ENCODE measurements at regions of chr3 and their contacts with region 1.

Region 1: GRCh38 chr3:15205934-15206661 is at the start of gene CAPN7:
- DNase-seq: peak; percentile 67
- ATAC-seq: peak; percentile 94
- H3K4me3 ChIP-seq: peak within 1 kb of the TSS; percentile 94
- H3K27ac ChIP-seq: peak within 1 kb of the TSS; percentile 61
- H3K4me1 ChIP-seq: no peaks in the 10 kb centered on the region
- H3K27me3 ChIP-seq: no peaks in the 10 kb centered on the region
- CTCF ChIP-seq: peak; percentile 39 to 40 (median 39); a peak in 4 of 6 replicates
- EP300 ChIP-seq: no peak
- POLR2A ChIP-seq: peak; percentile 95
- RAD21 ChIP-seq: no peak
- polyA plus RNA-seq, gene CAPN7: 5.3 to 6.7 TPM

Region 2: GRCh38 chr3:14482271-14482721 is 723.8 kb before region 1 on chr3:
- CTCF ChIA-PET with region 1: no interaction called
- POLR2A ChIA-PET with region 1: no interaction called
- RAD21 ChIA-PET with region 1: no interaction called
- SMC1A ChIA-PET with region 1: no interaction called
- in situ Hi-C with region 1: no loop called
- intact Hi-C with region 1: no loop called
- DNase-seq: no peak
- ATAC-seq: no peak
- H3K4me3 ChIP-seq: no peak overlapping the region
- H3K27ac ChIP-seq: no peak overlapping the region
- H3K4me1 ChIP-seq: peaks cover 10% of the 10 kb centered on the region
- H3K27me3 ChIP-seq: no peaks in the 10 kb centered on the region
- CTCF ChIP-seq: no peak
- EP300 ChIP-seq: no peak
- POLR2A ChIP-seq: no peak
- RAD21 ChIP-seq: no peak

Region 3: DNA sequence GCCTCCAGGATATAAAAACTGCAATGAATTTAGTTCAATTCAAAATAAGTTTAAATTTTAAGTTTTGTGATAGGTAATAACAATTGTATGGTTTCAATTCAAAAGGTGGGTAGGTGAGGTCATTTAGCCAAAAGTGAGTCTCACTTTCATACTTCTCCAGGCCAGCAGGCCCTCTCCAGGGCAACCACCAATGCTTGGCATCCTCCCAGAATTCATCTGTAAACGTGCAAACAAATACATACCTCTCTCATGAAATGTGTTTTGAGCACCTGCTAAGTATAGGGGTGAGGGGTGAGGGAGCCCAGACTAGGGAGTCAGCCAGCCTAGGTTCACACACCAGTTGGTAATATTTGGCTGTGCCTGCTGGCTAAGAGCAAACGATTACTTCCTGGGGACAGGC is 85.1 kb before region 1 on chr3:
- CTCF ChIA-PET with region 1: interaction called, 123 read pairs
- POLR2A ChIA-PET with region 1: interaction called, 3 read pairs
- RAD21 ChIA-PET with region 1: interaction called, 17 read pairs
- SMC1A ChIA-PET with region 1: interaction called, 49 read pairs
- in situ Hi-C with region 1: no loop called
- intact Hi-C with region 1: no loop called
- DNase-seq: peak; percentile 24
- ATAC-seq: peak; percentile 87
- H3K4me3 ChIP-seq: no peak overlapping the region
- H3K27ac ChIP-seq: no peak overlapping the region
- H3K4me1 ChIP-seq: peaks cover 14% of the 10 kb centered on the region
- H3K27me3 ChIP-seq: no peaks in the 10 kb centered on the region
- CTCF ChIP-seq: no peak
- EP300 ChIP-seq: no peak
- POLR2A ChIP-seq: no peak
- RAD21 ChIP-seq: no peak

Region 4: GRCh38 chr3:15217841-15218267 is 11.8 kb after region 1 on chr3:
- CTCF ChIA-PET with region 1: interaction called, 18 read pairs
- POLR2A ChIA-PET with region 1: interaction called, 7 read pairs
- RAD21 ChIA-PET with region 1: interaction called, 8 read pairs
- SMC1A ChIA-PET with region 1: interaction called, 15 read pairs
- in situ Hi-C with region 1: no loop called
- intact Hi-C with region 1: no loop called
- DNase-seq: no peak
- ATAC-seq: peak; percentile 56
- H3K4me3 ChIP-seq: no peak overlapping the region
- H3K27ac ChIP-seq: no peak overlapping the region
- H3K4me1 ChIP-seq: peaks cover 7% of the 10 kb centered on the region; the same call in 1 of the 2 replicates
- H3K27me3 ChIP-seq: no peaks in the 10 kb centered on the region
- CTCF ChIP-seq: no peak
- EP300 ChIP-seq: no peak
- POLR2A ChIP-seq: no peak
- RAD21 ChIP-seq: no peak

Region 5: GRCh38 chr3:15384510-15385237 is 178.6 kb after region 1 on chr3:
- CTCF ChIA-PET with region 1: interaction called, 12 read pairs
- POLR2A ChIA-PET with region 1: interaction called, 3 read pairs
- RAD21 ChIA-PET with region 1: interaction called, 30 read pairs
- SMC1A ChIA-PET with region 1: interaction called, 9 read pairs
- in situ Hi-C with region 1: no loop called
- intact Hi-C with region 1: no loop called
- DNase-seq: peak; percentile 84
- ATAC-seq: peak; percentile 87
- H3K4me3 ChIP-seq: peak overlapping the region; percentile 48; the same call in 1 of the 2 replicates
- H3K27ac ChIP-seq: peak overlapping the region; percentile 93
- H3K4me1 ChIP-seq: peaks cover 66% of the 10 kb centered on the region
- H3K27me3 ChIP-seq: no peaks in the 10 kb centered on the region
- CTCF ChIP-seq: no peak
- EP300 ChIP-seq: peak; percentile 86 to 93
- POLR2A ChIP-seq: no peak
- RAD21 ChIP-seq: 0 out of 2 replicates have a peak, but pooled peaks have one; percentile 1

Region 6: GRCh38 chr3:15527031-15527459 is 320.9 kb after region 1 on chr3:
- CTCF ChIA-PET with region 1: interaction called, 11 read pairs
- POLR2A ChIA-PET with region 1: no interaction called
- RAD21 ChIA-PET with region 1: no interaction called
- SMC1A ChIA-PET with region 1: interaction called, 3 read pairs
- in situ Hi-C with region 1: no loop called
- intact Hi-C with region 1: no loop called
- DNase-seq: no peak
- ATAC-seq: peak; percentile 98
- H3K4me3 ChIP-seq: no peak overlapping the region
- H3K27ac ChIP-seq: no peak overlapping the region
- H3K4me1 ChIP-seq: no peaks in the 10 kb centered on the region
- H3K27me3 ChIP-seq: no peaks in the 10 kb centered on the region
- CTCF ChIP-seq: peak; percentile 44 to 66 (median 59)
- EP300 ChIP-seq: no peak
- POLR2A ChIP-seq: no peak
- RAD21 ChIP-seq: peak; percentile 66

Region 7: GRCh38 chr3:16247276-16248061 is 1041.4 kb after region 1 on chr3:
- CTCF ChIA-PET with region 1: interaction called, 3 read pairs
- POLR2A ChIA-PET with region 1: interaction called, 3 read pairs
- RAD21 ChIA-PET with region 1: no interaction called
- SMC1A ChIA-PET with region 1: no interaction called
- in situ Hi-C with region 1: loop called (anchors 10 kb)
- intact Hi-C with region 1: no loop called
- DNase-seq: peak; percentile 43
- ATAC-seq: peak; percentile 94
- H3K4me3 ChIP-seq: no peak overlapping the region
- H3K27ac ChIP-seq: no peak overlapping the region
- H3K4me1 ChIP-seq: peaks cover 7% of the 10 kb centered on the region
- H3K27me3 ChIP-seq: no peaks in the 10 kb centered on the region
- CTCF ChIP-seq: peak; percentile 84 to 97 (median 90)
- EP300 ChIP-seq: peak; percentile 29 to 50; a peak in 1 of 4 replicates
- POLR2A ChIP-seq: no peak
- RAD21 ChIP-seq: peak; percentile 94